ENCODE measurements at regions of chr6 and their contacts with region 1.

Region 1: DNA sequence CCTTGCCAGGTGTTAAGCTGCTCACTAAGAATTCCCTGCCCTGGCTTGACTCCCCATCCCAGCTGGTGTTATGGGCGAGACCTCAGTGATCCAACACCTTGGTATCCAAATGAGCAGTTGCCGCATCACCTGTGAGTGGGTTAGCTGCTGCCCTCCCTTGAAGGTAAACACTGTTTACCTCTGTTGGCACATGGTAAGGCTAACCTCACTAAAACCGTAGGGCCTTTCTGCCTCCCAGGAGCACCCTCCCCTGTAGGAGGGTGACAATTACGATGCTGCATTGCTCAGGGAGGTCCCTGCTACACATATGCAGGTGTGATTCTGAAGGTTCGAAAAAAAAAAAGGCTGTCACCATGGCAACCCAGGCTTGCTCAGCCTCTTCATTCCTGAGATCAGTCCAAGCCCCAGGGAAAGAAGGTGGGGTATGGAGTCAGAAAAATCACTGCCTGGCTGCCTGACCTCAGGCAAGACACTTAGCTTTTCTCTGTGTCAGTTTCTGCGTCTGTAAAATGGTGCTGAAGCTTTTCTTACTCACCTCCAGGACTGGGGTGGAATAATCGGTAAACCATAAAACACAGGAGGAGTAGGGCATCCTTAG is 19.5 kb downstream of the PNPLA1 start:
- DNase-seq: no peak
- ATAC-seq: no peak
- H3K4me3 ChIP-seq: no peak overlapping the region
- H3K27ac ChIP-seq: no peak overlapping the region
- H3K4me1 ChIP-seq: no peaks in the 10 kb centered on the region; the same call in 1 of the 2 replicates
- H3K27me3 ChIP-seq: no peaks in the 10 kb centered on the region
- CTCF ChIP-seq: no peak

Region 2: GRCh38 chr6:36345681-36346414 is 56.5 kb after region 1 on chr6:
- CTCF ChIA-PET with region 1: no interaction called
- POLR2A ChIA-PET with region 1: no interaction called
- intact Hi-C with region 1: no loop called
- DNase-seq: no peak
- ATAC-seq: no peak
- H3K4me3 ChIP-seq: no peak overlapping the region
- H3K27ac ChIP-seq: no peak overlapping the region
- H3K4me1 ChIP-seq: peaks cover under 1% of the 10 kb centered on the region
- H3K27me3 ChIP-seq: no peaks in the 10 kb centered on the region
- CTCF ChIP-seq: no peak

Region 3: GRCh38 chr6:36386495-36387439 is 97.4 kb after region 1 on chr6:
- CTCF ChIA-PET with region 1: interaction called, 10 read pairs
- POLR2A ChIA-PET with region 1: no interaction called
- intact Hi-C with region 1: no loop called
- DNase-seq: peak; percentile 40
- ATAC-seq: peak; percentile 39
- H3K4me3 ChIP-seq: peak overlapping the region; percentile 72
- H3K27ac ChIP-seq: no peak overlapping the region
- H3K4me1 ChIP-seq: peaks cover 12% of the 10 kb centered on the region
- H3K27me3 ChIP-seq: peaks cover 24% of the 10 kb centered on the region
- CTCF ChIP-seq: no peak